ENCODE measurements at regions of chr3 and their contacts with region 1.

Region 1: GRCh38 chr3:155158393-155159037 is 78.4 kb downstream of the MME start:
- DNase-seq: no peak
- ATAC-seq: no peak
- H3K4me3 ChIP-seq: no peak overlapping the region
- H3K27ac ChIP-seq: peak overlapping the region in 1 of 4 donors; percentile 16
- H3K4me1 ChIP-seq: peaks cover 0 to 12% of the 10 kb centered on the region in 2 donors
- H3K27me3 ChIP-seq: no peaks in the 10 kb centered on the region
- CTCF ChIP-seq: no peak
- POLR2A ChIP-seq: no peak

Region 2: DNA sequence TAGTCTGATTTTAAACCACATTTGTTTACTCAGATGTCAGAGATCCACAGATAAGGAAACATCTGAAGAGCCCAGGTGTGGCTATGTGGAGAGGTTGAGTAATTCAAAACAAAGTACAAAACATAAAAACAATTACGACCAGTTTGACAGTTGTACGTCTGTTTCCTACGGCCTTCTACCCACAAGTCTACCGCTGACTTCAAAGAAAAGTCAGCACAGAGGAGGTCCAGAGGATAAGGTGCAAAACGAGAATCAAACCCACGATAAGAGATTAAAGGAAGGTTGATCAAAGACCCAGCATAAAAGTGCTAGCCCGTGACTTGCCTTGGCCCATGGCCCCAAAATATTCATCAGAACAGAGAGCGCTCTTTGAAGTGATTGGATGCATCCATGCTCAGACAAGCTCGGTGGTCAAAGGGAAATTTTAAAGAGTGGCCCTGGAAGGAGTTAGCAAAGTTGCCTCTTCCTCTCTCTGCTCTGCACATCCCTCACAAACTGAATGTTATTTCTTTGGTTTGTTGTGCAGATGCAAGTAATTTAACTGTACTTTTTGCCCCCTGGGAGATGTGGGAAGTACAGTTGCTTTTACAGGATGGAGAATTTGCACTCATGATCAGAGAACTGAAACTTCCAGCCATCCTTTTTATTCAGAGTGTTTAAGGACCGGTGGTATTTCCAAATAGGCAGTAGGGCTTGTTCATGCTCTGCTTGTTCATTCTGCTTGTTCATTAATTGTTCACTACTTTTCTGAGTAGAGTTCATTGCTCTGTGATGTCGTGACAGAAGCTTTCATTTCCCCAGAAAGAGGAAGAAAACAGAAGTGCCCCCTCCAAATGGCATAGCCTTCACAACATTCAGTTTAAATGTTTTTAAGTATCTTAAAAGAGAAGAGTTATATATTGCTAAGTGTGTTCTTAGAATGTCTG is 47.3 kb before region 1 on chr3:
- in situ Hi-C with region 1: no loop called
- intact Hi-C with region 1: no loop called
- DNase-seq: no peak
- ATAC-seq: no peak
- H3K4me3 ChIP-seq: no peak overlapping the region
- H3K27ac ChIP-seq: no peak overlapping the region
- H3K4me1 ChIP-seq: no peaks in the 10 kb centered on the region
- H3K27me3 ChIP-seq: no peaks in the 10 kb centered on the region
- CTCF ChIP-seq: no peak
- POLR2A ChIP-seq: no peak

Region 3: DNA sequence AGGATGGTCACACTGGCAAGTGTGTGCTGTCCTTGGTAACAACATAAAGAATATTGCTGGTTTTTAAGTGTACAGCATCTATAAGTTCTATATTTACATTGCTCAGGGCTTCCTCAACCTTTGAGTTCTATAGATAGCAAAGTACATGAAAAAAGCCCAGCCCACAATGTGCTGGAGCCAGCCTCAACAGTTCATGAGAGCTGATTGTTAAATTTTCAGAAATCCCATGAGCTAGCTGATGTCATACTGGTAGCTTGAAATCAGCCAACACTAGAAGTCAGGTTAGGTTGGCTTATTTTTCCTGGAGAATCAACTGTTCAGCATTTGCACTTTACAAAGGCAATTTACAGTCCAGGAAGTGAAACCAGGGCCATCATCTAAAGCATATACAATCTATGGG is 32.2 kb after region 1 on chr3:
- in situ Hi-C with region 1: no loop called
- intact Hi-C with region 1: loop called (anchors 1 kb)
- DNase-seq: no peak
- ATAC-seq: no peak
- H3K4me3 ChIP-seq: no peak overlapping the region
- H3K27ac ChIP-seq: peak overlapping the region in 1 of 4 donors; percentile 93
- H3K4me1 ChIP-seq: peaks cover 41 to 47% of the 10 kb centered on the region in 2 donors
- H3K27me3 ChIP-seq: no peaks in the 10 kb centered on the region
- CTCF ChIP-seq: no peak
- POLR2A ChIP-seq: no peak